BJ (cell line): ENCODE measurements at regions of chr7 and their contacts with region 1.

Region 1: DNA sequence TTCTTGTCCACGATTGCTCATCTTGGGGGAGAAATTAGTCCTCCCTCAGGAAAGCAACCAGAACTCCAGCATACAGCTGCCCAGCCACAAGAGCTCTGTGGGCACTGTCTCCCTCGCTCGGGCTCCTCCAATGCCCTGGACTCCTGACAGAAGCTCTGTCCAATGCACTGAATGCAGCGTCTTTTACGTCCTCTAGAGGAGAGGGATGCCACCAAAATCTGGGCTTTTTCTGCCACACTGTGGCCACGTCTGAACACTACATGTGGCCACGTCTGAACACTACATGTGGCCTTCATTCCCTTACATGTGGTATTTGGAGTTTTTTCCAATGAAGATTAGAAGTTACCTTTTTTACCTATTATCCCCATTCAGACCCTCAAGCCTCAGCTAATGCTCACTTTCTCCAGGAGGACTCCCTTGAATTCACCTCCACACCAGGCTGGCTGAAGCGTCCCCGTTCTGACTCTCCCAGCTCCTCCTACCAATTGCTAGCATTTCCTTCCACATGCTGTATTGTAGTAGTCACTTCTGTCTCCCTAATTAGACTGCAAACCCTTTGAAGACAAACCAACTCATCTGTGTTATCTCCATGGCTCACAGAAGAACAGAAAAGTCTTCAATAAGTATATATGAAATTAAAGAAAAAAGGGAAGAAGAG is 134.3 kb upstream of the PDE1C start:
- DNase-seq: peak; percentile 32
- H3K4me3 ChIP-seq: no peak overlapping the region
- H3K27me3 ChIP-seq: no peaks in the 10 kb centered on the region
- CTCF ChIP-seq: peak; percentile 71

Region 2: DNA sequence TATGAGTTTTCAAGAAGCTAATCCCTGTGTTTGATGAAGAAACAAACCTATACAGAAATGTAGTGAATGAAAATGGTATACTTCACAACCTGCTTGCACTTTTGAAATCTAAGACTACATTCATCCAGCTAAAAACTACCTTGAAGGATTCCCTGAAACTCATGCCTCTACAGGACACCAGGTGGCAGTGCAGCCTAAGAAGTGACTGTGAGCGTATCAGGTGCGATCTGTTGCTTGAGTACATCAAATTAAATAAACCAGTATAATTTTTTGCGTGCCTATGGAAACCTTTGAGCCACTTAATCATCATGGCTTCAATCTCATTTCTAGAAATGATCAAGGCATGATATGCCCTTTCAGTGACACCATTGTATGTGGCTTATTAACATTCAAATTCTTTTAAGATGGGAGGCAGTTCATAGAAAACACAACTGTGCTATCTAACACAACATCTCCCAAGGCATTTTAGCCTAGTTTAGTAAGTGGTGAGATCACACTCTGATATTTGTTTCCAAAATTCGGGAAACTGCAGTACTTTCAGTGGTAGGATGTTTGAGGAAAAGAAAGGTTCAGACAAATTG is 460.1 kb before region 1 on chr7:
- CTCF ChIA-PET with region 1: interaction called, 79 read pairs
- POLR2A ChIA-PET with region 1: no interaction called
- DNase-seq: no peak
- H3K4me3 ChIP-seq: no peak overlapping the region
- H3K27me3 ChIP-seq: no peaks in the 10 kb centered on the region
- CTCF ChIP-seq: peak; percentile 81

Region 3: DNA sequence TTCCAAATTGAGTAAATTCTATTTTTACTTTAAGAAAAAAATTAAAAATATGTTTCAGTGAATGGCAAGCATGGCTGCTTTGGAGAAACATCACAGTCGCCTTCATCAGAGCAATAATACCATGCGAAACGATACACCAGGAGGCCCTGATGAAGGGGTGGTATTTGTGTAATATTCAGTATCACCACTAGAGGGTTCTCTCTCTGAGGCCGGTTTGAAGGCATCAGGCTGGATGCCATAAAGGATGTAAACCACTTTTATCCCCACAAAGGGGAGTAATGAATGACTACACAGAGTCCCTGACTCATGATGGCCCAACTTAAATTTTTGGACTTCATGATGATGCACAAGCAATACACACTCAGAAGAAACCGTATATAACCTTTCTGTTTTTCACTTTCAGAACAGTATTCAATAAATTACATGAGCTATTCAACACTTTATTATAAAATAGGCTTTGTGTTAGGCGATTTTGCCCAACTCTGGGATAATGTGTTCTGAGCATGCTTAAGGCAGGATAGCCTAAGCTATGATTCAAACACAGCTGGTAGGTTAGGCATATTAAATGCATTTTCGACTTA is 422.0 kb before region 1 on chr7:
- CTCF ChIA-PET with region 1: interaction called, 10 read pairs
- POLR2A ChIA-PET with region 1: no interaction called
- DNase-seq: no peak
- H3K4me3 ChIP-seq: no peak overlapping the region
- H3K27me3 ChIP-seq: no peaks in the 10 kb centered on the region
- CTCF ChIP-seq: peak; percentile 68

Region 4: GRCh38 chr7:32164346-32164957 is 40.0 kb before region 1 on chr7:
- CTCF ChIA-PET with region 1: interaction called, 11 read pairs
- POLR2A ChIA-PET with region 1: no interaction called
- DNase-seq: no peak
- H3K4me3 ChIP-seq: no peak overlapping the region
- H3K27me3 ChIP-seq: no peaks in the 10 kb centered on the region
- CTCF ChIP-seq: peak; percentile 68

Region 5: DNA sequence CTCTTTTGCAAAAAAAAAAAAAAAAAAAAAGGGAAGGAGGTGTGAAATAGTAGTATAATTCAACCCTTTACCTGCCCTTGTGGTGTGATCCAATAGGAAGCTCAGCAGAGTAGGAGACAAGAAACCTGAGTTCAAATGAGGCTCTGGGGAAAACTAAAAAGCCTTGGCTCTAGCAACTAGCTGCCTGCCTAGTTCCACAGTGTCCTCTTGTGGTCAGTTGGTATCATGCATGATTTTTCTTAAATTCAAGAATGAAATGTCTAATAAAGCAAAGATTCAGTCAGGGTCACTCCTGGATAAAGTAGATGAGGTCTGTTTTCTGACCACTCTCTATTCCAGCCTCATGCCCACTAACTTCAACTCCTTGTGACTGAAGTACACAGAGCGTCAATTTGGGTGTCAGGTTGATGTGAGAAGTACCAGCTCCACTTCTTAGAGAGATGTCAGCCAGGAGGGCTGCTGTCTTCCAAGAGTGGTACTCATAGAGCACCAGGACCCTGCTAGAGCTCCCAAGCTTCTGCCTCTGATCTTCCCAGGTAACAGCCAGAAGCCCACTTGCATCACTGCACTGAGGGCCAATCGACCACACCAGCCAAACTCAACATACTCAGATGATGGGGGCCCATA is 275.2 kb after region 1 on chr7:
- CTCF ChIA-PET with region 1: interaction called, 170 read pairs
- POLR2A ChIA-PET with region 1: no interaction called
- DNase-seq: no peak
- H3K4me3 ChIP-seq: no peak overlapping the region
- H3K27me3 ChIP-seq: no peaks in the 10 kb centered on the region; the same call in 1 of the 2 replicates
- CTCF ChIP-seq: peak; percentile 94